A549 (cell line): ENCODE measurements at regions of chr19 and their contacts with region 1.

Region 1: GRCh38 chr19:48363810-48364563 is at the starts of genes SYNGR4 and TMEM143:
- DNase-seq: peak; percentile 100
- ATAC-seq: peak; percentile 75 to 89
- H3K4me3 ChIP-seq: peak within 1 kb of the TSS; percentile 51
- H3K27ac ChIP-seq: peak within 1 kb of the TSS; percentile 90 to 97
- H3K4me1 ChIP-seq: peaks cover 8% of the 10 kb centered on the region
- CTCF ChIP-seq: no peak
- EP300 ChIP-seq: no peak
- POLR2A ChIP-seq: peak; percentile 70
- RAD21 ChIP-seq: no peak
- polyA plus RNA-seq, gene SYNGR4: 2.3 and 2.9 TPM in 2 replicates
- polyA plus RNA-seq, gene TMEM143: 7.4 and 7.6 TPM in 2 replicates

Region 2: DNA sequence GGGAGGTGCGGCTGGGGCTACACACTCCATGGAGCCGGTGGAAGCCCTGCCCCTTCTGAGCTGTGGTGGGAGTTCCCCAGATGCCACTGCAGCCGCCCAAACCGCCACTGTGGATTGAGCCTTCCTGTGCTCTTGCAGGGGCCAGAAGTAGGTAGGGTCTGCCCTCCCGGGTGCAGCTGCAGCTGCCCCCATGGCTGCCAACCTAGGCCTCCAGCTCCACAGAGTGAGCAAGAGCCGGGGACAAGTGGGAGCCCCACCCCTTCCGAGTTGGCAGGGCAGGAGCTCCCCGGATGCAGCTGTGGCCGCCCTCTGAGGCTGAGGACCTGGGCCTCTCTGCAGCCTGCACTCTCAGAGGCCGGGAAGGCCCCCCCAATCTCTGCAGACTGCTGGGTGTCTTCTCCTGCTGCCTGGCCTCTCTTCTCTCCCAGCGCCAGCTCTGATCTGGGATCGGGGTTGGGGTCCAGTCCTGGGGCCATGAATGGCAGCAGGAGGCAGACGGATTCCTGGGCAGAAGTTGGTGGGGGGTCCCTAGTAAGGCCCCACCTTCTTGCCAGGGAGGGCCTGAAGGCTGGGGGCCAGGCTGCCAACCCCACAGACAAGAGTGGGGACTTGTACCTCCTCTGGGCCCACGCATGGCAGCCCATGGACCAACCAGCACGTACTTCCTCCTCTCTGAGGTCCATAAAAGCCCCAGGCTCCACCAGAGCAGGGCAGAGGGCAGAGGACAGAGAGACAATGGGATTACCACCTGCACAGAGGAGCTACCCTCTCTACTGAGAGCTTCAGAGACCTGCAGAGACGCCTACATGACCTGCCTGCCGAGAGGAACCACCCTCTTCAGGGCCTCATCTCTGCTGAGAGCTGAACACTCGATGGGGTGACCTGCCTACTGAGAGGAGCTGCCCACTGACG is 1542.2 kb before region 1 on chr19:
- CTCF ChIA-PET with region 1: no interaction called
- POLR2A ChIA-PET with region 1: no interaction called
- DNase-seq: no peak
- ATAC-seq: peak; percentile 11 to 32; a peak in 3 of 6 replicates
- H3K4me3 ChIP-seq: no peak overlapping the region
- H3K27ac ChIP-seq: peak overlapping the region in 1 of 2 experiments; percentile 15; a peak in 1 of 6 replicates
- H3K4me1 ChIP-seq: no peaks in the 10 kb centered on the region
- CTCF ChIP-seq: no peak
- EP300 ChIP-seq: no peak
- POLR2A ChIP-seq: no peak
- RAD21 ChIP-seq: no peak

Region 3: DNA sequence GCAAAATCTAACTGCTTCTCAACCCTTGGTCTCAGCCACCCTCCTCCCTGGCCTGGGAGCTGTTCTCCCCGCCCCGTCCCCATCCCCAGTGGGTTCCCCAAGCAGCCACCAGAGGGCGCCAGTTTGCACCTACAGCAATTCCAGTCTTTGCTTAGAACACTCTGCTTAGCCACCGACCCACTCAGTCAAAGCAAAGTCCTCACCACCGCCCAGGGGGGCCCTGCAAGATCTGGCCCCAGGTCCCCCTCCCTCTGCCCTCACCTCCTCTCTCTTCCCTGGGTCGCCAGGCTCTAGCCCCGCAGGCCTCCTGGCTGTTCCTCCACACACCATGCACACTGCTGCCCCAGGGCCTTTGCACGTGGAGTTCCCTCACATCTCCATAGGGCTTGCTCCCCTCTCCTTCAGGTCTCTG is 12.6 kb before region 1 on chr19:
- CTCF ChIA-PET with region 1: interaction called, 16 read pairs
- POLR2A ChIA-PET with region 1: interaction called, 13 read pairs
- DNase-seq: peak; percentile 82 to 89
- ATAC-seq: peak; percentile 76 to 83
- H3K4me3 ChIP-seq: no peak overlapping the region
- H3K27ac ChIP-seq: peak overlapping the region in 1 of 2 experiments; percentile 74; a peak in 3 of 6 replicates
- H3K4me1 ChIP-seq: peaks cover 29% of the 10 kb centered on the region
- CTCF ChIP-seq: peak; percentile 90
- EP300 ChIP-seq: no peak
- POLR2A ChIP-seq: no peak
- RAD21 ChIP-seq: peak; percentile 73

Region 4: DNA sequence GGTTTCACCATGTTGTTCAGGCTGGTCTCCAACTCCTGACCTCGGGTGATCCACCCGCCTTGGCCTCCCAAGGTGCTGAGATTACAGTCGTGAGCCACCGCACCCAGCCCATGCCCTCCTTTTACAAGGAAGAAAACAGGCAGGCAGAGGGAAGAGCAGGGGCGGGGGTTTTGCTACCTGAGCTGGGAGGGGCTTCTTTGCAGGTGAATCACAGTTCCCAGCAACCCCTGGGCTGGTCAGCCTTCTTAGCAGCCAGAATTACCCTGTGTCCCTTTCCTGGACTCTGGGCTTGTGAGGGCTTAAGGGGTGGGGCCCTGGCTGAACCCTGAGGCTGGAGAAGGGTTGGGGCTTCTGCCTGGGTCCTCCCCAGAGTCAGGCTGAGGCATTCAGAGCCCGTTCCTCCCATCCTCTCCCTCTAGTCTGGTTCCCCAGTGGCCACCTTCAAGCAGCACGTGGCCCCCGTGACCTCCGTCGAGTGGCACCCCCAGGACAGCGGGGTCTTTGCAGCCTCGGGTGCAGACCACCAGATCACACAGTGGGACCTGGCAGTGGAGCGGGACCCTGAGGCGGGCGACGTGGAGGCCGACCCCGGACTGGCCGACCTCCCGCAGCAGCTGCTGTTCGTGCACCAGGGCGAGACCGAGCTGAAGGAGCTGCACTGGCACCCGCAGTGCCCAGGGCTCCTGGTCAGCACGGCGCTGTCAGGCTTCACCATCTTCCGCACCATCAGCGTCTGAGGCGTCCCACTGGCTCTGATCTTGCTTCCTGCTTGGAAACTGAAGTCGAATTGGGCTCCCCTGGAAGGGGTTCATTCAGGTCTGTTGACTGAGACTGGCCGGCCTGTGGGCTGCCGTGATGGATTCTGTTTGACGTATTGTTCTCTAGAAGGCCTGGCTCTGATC is 88.6 kb after region 1 on chr19:
- CTCF ChIA-PET with region 1: no interaction called
- POLR2A ChIA-PET with region 1: no interaction called
- DNase-seq: no peak
- ATAC-seq: peak in 1 of 2 experiments; percentile 14; a peak in 3 of 6 replicates
- H3K4me3 ChIP-seq: no peak overlapping the region
- H3K27ac ChIP-seq: no peak overlapping the region
- H3K4me1 ChIP-seq: peaks cover 2% of the 10 kb centered on the region; the same call in 1 of the 3 replicates
- CTCF ChIP-seq: no peak
- EP300 ChIP-seq: no peak
- POLR2A ChIP-seq: no peak
- RAD21 ChIP-seq: no peak

Region 5: DNA sequence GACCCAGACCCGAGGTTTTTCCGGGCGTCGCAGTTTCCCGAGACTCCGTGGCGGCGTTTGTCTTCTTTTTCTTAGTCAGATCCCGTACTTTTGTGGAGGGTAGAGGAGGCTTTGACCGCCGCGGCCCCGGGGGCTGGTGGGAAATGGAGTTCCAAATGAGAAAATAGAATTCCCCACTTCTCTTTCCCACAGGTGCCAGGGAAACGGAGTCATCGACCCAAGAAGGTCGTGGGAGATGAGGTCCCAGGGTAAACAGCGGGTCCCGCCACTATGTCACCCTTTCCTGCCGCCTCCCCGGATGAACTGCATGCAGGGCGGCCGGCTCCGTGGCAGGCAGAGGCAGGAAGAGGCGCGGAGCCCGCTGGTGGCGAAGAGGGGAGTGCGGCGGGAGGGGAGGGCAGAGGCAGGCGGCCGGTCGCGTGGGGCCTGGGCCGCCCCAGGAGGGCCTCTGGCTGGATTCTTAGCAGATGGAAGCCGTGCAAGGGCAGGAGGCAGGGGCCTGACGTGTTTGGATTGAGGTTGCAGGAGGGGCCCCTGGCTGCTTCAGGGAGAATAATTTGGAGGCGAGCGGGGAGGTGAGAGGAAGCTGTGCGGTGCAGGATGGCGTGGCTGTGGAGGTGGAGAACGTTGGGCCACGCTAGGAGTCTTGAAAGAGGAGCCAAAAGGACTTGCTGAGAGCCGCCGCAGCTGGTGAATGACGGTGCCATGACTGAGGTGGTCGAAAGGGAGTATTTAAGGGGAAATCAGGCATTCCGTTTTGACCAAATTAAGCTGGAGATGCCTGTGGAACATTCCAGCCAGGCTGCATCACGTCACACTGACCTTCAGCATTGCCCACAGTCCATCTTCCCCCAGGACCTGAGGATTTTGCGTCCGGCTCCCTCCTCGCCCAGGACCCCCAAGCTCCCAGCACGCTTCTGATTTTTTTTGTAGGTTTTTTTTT is 116.8 kb after region 1 on chr19:
- CTCF ChIA-PET with region 1: no interaction called
- POLR2A ChIA-PET with region 1: no interaction called
- DNase-seq: no peak
- ATAC-seq: no peak
- H3K4me3 ChIP-seq: no peak overlapping the region
- H3K27ac ChIP-seq: no peak overlapping the region
- H3K4me1 ChIP-seq: peaks cover 20% of the 10 kb centered on the region
- CTCF ChIP-seq: no peak
- EP300 ChIP-seq: no peak
- POLR2A ChIP-seq: no peak
- RAD21 ChIP-seq: no peak

Region 6: DNA sequence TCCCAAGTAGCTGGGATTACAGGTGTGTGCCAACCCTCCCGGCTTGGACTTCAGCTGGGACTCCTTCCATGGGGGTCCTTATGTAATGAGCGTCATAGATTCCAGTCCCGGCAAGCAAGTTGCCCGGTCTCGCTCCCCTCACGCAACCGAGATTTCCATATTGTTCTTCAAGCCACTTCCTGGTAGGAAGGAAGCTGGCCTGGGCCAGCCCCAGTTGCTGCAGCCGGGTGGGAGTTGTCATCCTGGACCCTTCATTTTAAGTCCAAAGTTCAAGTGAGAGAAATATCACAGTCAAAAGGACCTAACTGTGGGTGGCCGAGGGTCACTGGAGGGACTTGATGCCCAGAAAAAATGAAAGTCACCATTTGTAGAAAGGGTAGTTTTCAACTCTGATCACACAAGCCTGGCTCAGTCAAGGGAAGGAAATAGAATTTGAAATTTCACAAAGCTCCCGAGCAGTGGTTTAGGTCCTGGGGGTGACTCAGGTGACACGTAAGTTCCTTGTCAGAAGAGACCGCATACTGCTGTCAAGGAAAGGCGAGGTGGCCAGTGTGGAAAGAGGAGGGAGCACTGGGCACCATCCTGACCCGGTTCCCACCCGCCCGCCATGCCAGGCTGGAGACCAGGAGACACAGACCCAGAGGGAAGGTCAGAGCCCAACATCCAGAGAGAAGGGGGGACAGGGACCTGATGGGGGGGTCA is 396.7 kb after region 1 on chr19:
- CTCF ChIA-PET with region 1: no interaction called
- POLR2A ChIA-PET with region 1: no interaction called
- DNase-seq: no peak
- ATAC-seq: peak in 1 of 2 experiments; percentile 36; a peak in 2 of 6 replicates
- H3K4me3 ChIP-seq: no peak overlapping the region
- H3K27ac ChIP-seq: peak overlapping the region in 1 of 2 experiments; percentile 35; a peak in 1 of 6 replicates
- H3K4me1 ChIP-seq: peaks cover 11% of the 10 kb centered on the region; the same call in 2 of the 3 replicates
- CTCF ChIP-seq: no peak
- EP300 ChIP-seq: no peak
- POLR2A ChIP-seq: no peak
- RAD21 ChIP-seq: no peak